Mucosa of descending colon (tissue), 3 donors: ENCODE measurements at regions of chr4 and their contacts with region 1.

Region 1: GRCh38 chr4:9762823-9763475 is 18.5 kb upstream of the DRD5 start:
- DNase-seq: peak in 2 of 3 donors; percentile 24 to 84
- ATAC-seq: peak; percentile 31
- H3K4me3 ChIP-seq: no peak overlapping the region
- H3K4me1 ChIP-seq: no peaks in the 10 kb centered on the region
- CTCF ChIP-seq: no peak

Region 2: GRCh38 chr4:10013722-10014121 is 250.8 kb after region 1 on chr4:
- intact Hi-C with region 1: loop called (anchors 5 to 10 kb)
- DNase-seq: peak; percentile 65 to 90 (median 81)
- ATAC-seq: peak; percentile 89
- H3K4me3 ChIP-seq: no peak overlapping the region
- H3K4me1 ChIP-seq: no peaks in the 10 kb centered on the region
- CTCF ChIP-seq: peak; percentile 14

Region 3: DNA sequence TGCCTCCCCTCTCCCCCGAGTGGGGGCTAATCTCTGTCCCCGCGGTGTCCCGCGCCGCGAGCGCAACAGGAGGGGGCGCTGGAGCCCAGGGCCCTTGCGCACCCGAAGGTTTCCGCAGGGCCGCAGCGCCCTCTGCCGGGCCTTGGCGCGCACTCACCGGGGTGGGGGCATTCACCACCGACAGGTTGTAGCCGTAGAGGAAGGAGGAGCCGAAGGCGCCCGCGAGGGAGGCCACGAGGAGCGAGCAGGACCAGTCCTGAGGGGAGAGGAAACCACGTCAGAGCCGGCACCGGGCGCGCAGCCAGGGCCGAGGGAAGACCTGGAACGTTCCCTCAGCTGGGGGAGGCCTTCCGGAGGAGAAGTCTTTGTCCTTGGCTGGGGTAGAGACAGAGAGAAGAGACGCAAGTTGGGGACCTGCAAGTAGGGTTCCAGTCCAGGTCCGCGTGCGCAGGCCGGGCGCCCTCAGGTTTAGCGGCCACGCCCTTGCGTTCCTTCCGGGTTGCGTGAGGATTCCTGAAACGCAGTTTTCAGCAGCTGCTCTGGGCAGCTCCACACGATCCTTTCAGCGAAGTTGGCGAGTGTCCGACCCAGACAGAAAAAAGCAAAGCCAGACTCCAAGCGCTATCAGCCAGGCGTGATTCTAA is 256.0 kb after region 1 on chr4:
- intact Hi-C with region 1: loop called (anchors 5 to 10 kb)
- DNase-seq: peak; percentile 97 to 98 (median 98)
- ATAC-seq: peak; percentile 98
- H3K4me3 ChIP-seq: no peak overlapping the region
- H3K4me1 ChIP-seq: no peaks in the 10 kb centered on the region
- CTCF ChIP-seq: peak; percentile 99